PC-9 (cell line): ENCODE measurements at regions of chr1 and their contacts with region 1.

Region 1: DNA sequence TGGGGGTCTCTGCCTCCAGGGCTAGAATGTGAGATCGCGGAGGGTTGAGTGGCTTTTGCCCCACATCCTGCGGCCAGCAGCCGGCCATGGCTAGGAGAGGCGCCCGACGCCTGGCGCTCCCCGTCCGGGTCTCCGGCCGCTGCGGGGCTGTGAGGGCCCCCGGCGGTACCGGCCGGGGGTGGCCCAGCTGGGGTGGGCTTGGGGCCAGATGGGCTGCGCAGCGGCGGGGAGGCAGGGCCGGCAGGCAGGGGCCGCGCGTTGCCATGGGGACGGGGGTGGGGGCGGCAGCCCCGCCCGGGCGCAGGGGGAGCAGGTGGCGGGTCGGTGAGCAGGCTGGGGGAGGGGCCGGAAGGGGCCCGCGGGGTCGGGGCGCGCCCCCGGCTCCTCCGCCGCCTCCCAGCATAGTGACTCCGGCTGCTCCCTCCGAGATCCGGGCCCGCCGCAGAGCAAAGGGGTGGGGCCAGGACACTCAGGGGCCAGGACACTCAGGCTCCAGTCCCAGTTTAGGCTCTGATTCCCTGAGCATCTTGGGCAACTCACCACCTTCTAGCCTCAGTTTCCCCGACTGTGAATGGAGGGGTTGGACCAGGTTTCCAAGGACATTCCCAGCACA is 68.6 kb upstream of the SSBP3 start:
- DNase-seq: no peak
- H3K4me3 ChIP-seq: no peak overlapping the region
- H3K27ac ChIP-seq: no peak overlapping the region
- H3K4me1 ChIP-seq: no peaks in the 10 kb centered on the region
- H3K27me3 ChIP-seq: peaks cover 4% of the 10 kb centered on the region; the same call in 1 of the 2 replicates
- CTCF ChIP-seq: no peak

Region 2: GRCh38 chr1:54996359-54996868 is 521.7 kb after region 1 on chr1:
- CTCF ChIA-PET with region 1: interaction called, 16 read pairs
- POLR2A ChIA-PET with region 1: no interaction called
- intact Hi-C with region 1: no loop called
- DNase-seq: peak; percentile 39 to 81
- H3K4me3 ChIP-seq: peak overlapping the region; percentile 41; the same call in 1 of the 2 replicates
- H3K27ac ChIP-seq: no peak overlapping the region
- H3K4me1 ChIP-seq: 0 out of 2 replicates have a peak, but pooled peaks cover 4% of the 10 kb centered on the region
- H3K27me3 ChIP-seq: no peaks in the 10 kb centered on the region
- CTCF ChIP-seq: peak; percentile 95